Activated CD4-positive, alpha-beta T cell treated with anti-CD3 and anti-CD28 coated beads, Interleukin-2, amount 10 ng/mL, durations not matched to agents 24 days and 14 days (primary cell): ENCODE measurements at regions of chr9 and their contacts with region 1.

Region 1: GRCh38 chr9:77841739-77842386 is 189.7 kb downstream of the GNAQ start:
- DNase-seq: no peak
- H3K4me3 Mint-ChIP-seq: no peak overlapping the region
- H3K27ac Mint-ChIP-seq: no peak overlapping the region
- H3K4me1 Mint-ChIP-seq: peaks cover 11% of the 10 kb centered on the region
- H3K27me3 Mint-ChIP-seq: no peaks in the 10 kb centered on the region

Region 2: GRCh38 chr9:77456829-77457437 is 384.9 kb before region 1 on chr9:
- intact Hi-C with region 1: loop called (anchors 5 kb)
- DNase-seq: peak; percentile 95
- H3K4me3 Mint-ChIP-seq: no peak overlapping the region
- H3K27ac Mint-ChIP-seq: no peak overlapping the region
- H3K4me1 Mint-ChIP-seq: peaks cover 25% of the 10 kb centered on the region
- H3K27me3 Mint-ChIP-seq: no peaks in the 10 kb centered on the region

Region 3: DNA sequence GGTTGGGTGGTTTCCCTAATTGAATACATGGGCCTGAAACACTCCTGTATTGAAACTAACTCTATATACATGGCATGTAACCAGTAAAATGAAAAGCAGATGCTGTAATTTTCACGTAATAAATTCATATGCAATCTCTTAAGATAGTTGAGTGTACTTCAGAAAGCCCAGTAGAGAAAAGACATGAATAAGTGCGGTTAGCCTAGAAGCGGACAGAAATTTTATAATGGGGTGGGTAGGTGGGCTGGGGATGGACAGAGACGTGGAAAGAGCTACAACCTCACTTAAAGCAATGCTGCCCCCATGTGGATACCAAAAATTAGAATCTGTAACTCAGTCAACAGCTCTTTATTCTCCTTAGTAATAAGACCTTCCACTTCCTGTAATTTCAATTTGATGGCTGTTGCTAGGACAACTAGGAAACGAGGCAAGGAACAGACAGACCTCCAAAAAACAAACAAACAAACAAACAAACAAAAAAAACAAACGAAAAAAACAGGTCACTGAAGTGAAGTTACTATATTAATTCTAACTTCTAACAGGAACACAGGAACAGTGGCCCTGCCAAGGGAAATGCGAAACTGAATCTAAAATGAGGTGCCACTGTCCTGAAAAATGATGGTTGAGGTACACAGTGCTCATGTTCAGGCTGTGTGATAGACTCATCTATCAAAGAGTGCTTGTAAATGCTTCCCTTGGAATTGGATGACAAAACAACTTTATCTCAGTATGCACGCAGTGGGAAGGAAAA is 90.3 kb before region 1 on chr9:
- intact Hi-C with region 1: loop called (anchors 5 kb)
- DNase-seq: peak; percentile 75
- H3K4me3 Mint-ChIP-seq: no peak overlapping the region
- H3K27ac Mint-ChIP-seq: peak overlapping the region; percentile 59
- H3K4me1 Mint-ChIP-seq: peaks cover 24% of the 10 kb centered on the region
- H3K27me3 Mint-ChIP-seq: no peaks in the 10 kb centered on the region

Region 4: DNA sequence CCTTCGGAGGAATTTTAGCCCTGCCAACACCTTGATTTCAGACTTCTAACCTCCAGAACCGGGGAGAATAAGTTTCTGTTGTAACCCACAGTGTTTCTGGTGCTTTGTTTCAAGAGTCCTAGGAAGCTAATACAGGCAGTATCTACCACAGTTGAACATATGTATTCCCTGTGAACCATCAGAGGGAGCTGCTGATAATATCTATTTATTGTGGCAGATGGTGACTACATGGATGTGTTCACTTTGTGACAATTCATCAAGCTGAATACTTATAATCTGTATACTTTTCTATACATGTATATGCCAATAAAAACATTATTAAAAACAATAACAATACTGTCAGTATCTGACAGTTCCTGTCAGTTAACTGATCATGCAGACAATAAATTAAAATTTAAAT is 56.5 kb before region 1 on chr9:
- intact Hi-C with region 1: no loop called
- DNase-seq: no peak
- H3K4me3 Mint-ChIP-seq: no peak overlapping the region
- H3K27ac Mint-ChIP-seq: no peak overlapping the region
- H3K4me1 Mint-ChIP-seq: peaks cover 13% of the 10 kb centered on the region
- H3K27me3 Mint-ChIP-seq: no peaks in the 10 kb centered on the region

Region 5: DNA sequence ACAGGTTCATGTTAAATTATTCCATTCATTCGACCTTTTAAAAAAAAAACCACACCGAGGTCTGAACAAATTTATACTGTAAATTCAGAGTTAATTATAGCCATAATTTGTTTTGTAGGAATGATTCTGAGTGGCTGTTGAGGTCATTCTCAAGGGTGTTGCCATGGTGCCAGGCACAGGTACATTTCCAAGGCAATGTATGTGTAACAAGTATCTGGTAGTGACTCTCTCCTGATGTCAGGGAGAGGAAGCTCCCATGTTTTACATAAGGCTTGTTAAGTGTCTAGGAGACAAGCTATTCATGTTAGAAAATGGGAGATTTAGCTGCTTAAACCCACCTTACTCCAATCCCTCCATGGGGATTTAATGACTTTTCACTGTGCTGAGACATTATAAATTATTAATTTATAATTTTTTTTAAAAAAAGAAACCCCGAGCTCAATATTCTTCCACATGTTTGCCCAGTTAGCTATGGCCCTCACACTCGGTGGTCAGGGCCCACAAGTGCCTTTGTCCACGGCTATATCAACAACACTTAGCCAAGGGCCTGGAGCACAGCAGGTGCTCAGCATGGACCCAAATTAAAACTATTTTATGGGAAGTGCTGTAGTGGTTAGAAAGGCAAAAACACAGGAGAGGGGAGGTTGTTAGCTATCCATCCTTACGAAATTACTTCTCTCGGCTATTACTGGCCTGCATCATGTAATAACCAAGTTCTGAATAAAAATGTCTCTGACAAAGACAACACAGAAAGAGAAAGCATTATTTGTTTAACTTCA is 39.2 kb before region 1 on chr9:
- intact Hi-C with region 1: loop called (anchors 1 kb)
- DNase-seq: no peak
- H3K4me3 Mint-ChIP-seq: no peak overlapping the region
- H3K27ac Mint-ChIP-seq: no peak overlapping the region
- H3K4me1 Mint-ChIP-seq: peaks cover 25% of the 10 kb centered on the region
- H3K27me3 Mint-ChIP-seq: no peaks in the 10 kb centered on the region